CD4-positive, alpha-beta T cell (primary cell): ENCODE measurements at regions of chr3 and their contacts with region 1.

Region 1: DNA sequence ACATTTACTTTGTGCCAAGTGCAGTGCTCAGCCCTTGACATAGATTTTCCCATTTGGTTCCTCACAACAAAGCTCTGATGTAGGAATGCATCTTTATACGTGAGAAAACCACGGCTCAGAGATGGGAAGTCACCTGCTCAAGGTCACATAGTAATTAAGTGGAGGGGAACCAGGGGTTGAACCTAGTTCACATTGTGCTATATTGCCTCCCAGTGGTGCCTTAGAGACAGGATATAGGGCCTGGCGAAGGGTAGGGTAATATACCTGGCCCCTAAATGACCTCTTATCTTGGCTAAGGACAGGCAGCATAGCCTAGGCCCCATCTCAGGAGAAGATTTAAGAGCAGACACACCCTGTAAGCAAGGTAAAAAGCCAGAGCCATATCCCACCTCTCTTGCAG is 71.5 kb downstream of the FOXP1 start:
- DNase-seq: peak in 9 of 14 experiments; percentile 20 to 85 (median 46)
- ATAC-seq: peak; percentile 99
- H3K4me3 ChIP-seq: no peak overlapping the region
- H3K4me3 Mint-ChIP-seq: no peak overlapping the region
- H3K27ac ChIP-seq: no peak overlapping the region
- H3K27ac Mint-ChIP-seq: no peak overlapping the region
- H3K4me1 ChIP-seq: peaks cover 22% of the 10 kb centered on the region
- H3K4me1 Mint-ChIP-seq: peaks cover 21% of the 10 kb centered on the region
- H3K27me3 ChIP-seq: no peaks in the 10 kb centered on the region
- H3K27me3 Mint-ChIP-seq: no peaks in the 10 kb centered on the region
- CTCF ChIP-seq: peak; percentile 70

Region 2: GRCh38 chr3:70550723-70551319 is 961.2 kb before region 1 on chr3:
- CTCF ChIA-PET with region 1: no interaction called
- POLR2A ChIA-PET with region 1: no interaction called
- intact Hi-C with region 1: loop called (anchors 1 to 2 kb)
- DNase-seq: peak; percentile 59 to 83 (median 65)
- ATAC-seq: peak; percentile 84
- H3K4me3 ChIP-seq: no peak overlapping the region
- H3K4me3 Mint-ChIP-seq: no peak overlapping the region
- H3K27ac ChIP-seq: no peak overlapping the region
- H3K27ac Mint-ChIP-seq: no peak overlapping the region
- H3K4me1 ChIP-seq: no peaks in the 10 kb centered on the region
- H3K4me1 Mint-ChIP-seq: no peaks in the 10 kb centered on the region
- H3K27me3 ChIP-seq: no peaks in the 10 kb centered on the region
- H3K27me3 Mint-ChIP-seq: peaks cover 12% of the 10 kb centered on the region
- CTCF ChIP-seq: peak; percentile 75

Region 3: DNA sequence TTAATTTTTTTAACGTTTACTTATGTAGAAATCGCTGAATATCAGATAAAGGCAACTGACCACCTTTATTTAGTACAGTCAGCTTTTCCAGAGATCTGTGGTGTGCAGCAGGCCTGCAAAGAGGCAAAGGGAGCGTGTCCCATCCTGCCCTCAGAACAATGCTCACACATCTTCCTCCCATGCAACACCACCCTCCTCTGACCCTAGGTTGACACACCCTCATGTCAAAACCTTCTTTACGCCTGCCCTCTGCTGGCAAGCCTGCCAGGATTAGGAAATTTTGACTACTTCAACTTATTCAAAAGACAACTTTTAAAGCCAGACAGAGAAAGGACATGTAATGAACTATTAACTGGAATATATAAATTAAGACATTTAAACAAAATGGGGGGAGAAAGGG is 442.2 kb before region 1 on chr3:
- CTCF ChIA-PET with region 1: no interaction called
- POLR2A ChIA-PET with region 1: no interaction called
- intact Hi-C with region 1: loop called (anchors 5 to 10 kb)
- DNase-seq: peak; percentile 52 to 84 (median 70)
- ATAC-seq: peak; percentile 24
- H3K4me3 ChIP-seq: no peak overlapping the region
- H3K4me3 Mint-ChIP-seq: peak overlapping the region; percentile 57
- H3K27ac ChIP-seq: peak overlapping the region in 1 of 2 donors; percentile 18
- H3K27ac Mint-ChIP-seq: peak overlapping the region; percentile 86
- H3K4me1 ChIP-seq: peaks cover 57% of the 10 kb centered on the region
- H3K4me1 Mint-ChIP-seq: peaks cover 78% of the 10 kb centered on the region
- H3K27me3 ChIP-seq: no peaks in the 10 kb centered on the region
- H3K27me3 Mint-ChIP-seq: no peaks in the 10 kb centered on the region
- CTCF ChIP-seq: peak; percentile 74

Region 4: GRCh38 chr3:71305231-71306206 is 206.5 kb before region 1 on chr3:
- CTCF ChIA-PET with region 1: interaction called, 4 read pairs
- POLR2A ChIA-PET with region 1: no interaction called
- intact Hi-C with region 1: loop called (anchors 2 to 5 kb)
- DNase-seq: peak in 9 of 14 experiments; percentile 12 to 50 (median 19)
- ATAC-seq: peak; percentile 44
- H3K4me3 ChIP-seq: peak overlapping the region; percentile 60
- H3K4me3 Mint-ChIP-seq: peak overlapping the region; percentile 87
- H3K27ac ChIP-seq: peak overlapping the region; percentile 6 to 69
- H3K27ac Mint-ChIP-seq: peak overlapping the region; percentile 93
- H3K4me1 ChIP-seq: peaks cover 24% of the 10 kb centered on the region
- H3K4me1 Mint-ChIP-seq: peaks cover 96% of the 10 kb centered on the region
- H3K27me3 ChIP-seq: no peaks in the 10 kb centered on the region
- H3K27me3 Mint-ChIP-seq: no peaks in the 10 kb centered on the region
- CTCF ChIP-seq: no peak

Region 5: DNA sequence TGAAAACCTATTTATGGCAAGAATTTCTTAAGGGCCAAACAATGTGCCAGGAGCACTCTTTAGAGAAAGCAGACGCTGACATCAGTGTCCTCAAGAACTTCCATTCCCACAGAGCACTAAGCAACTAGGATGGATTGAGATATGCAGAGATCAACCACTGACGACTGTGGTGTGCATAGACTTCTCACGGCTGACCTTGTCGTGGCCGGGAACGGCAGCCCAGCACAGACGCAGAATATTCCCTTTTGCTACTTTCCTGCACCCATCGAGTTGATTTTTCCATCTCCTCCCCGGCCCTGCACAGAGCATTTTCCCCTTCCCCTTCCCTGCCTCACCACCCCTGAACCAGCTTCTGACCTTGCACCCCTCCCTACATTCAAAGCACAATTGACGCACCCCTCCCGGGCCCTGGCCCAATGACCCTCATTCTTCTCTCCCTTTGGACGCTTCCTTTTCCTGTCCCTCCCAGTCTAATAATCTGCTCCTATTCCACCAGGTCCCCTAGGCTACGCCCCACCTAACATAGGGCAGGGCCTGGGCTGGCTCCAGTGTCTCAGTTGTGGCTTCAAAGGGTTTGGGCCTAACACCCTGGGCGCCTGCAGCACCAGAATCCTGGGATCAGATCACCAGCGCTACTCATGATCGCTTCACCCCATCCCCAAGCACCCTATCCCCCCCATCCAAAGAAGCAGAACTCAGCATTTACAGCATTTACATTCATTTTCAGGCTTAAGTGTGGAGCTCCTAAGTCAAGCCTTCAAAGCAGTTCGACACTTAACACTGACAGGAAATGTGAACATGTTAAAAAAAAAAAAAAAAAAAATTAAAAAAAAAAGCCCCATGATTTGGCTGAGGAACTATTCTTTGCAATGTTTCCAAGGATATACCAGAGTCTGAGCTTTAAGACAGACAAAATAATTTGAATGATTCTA is 79.7 kb before region 1 on chr3:
- CTCF ChIA-PET with region 1: no interaction called
- POLR2A ChIA-PET with region 1: no interaction called
- intact Hi-C with region 1: no loop called
- DNase-seq: peak in 3 of 14 experiments; percentile 60 to 62 (median 61)
- ATAC-seq: peak; percentile 65
- H3K4me3 ChIP-seq: no peak overlapping the region
- H3K4me3 Mint-ChIP-seq: peak overlapping the region; percentile 71
- H3K27ac ChIP-seq: peak overlapping the region; percentile 37 to 79
- H3K27ac Mint-ChIP-seq: peak overlapping the region; percentile 91
- H3K4me1 ChIP-seq: peaks cover 74% of the 10 kb centered on the region
- H3K4me1 Mint-ChIP-seq: peaks cover 94% of the 10 kb centered on the region
- H3K27me3 ChIP-seq: no peaks in the 10 kb centered on the region
- H3K27me3 Mint-ChIP-seq: no peaks in the 10 kb centered on the region
- CTCF ChIP-seq: no peak

Region 6: GRCh38 chr3:71456156-71456555 is 55.8 kb before region 1 on chr3:
- CTCF ChIA-PET with region 1: interaction called, 10 read pairs
- POLR2A ChIA-PET with region 1: interaction called, 9 read pairs
- intact Hi-C with region 1: no loop called
- DNase-seq: peak in 4 of 14 experiments; percentile 49 to 64 (median 63)
- ATAC-seq: peak; percentile 37
- H3K4me3 ChIP-seq: peak overlapping the region; percentile 25
- H3K4me3 Mint-ChIP-seq: peak overlapping the region; percentile 78
- H3K27ac ChIP-seq: peak overlapping the region; percentile 72 to 78
- H3K27ac Mint-ChIP-seq: peak overlapping the region; percentile 94
- H3K4me1 ChIP-seq: peaks cover 54% of the 10 kb centered on the region
- H3K4me1 Mint-ChIP-seq: peaks cover 95% of the 10 kb centered on the region
- H3K27me3 ChIP-seq: no peaks in the 10 kb centered on the region
- H3K27me3 Mint-ChIP-seq: no peaks in the 10 kb centered on the region
- CTCF ChIP-seq: peak; percentile 46